Activated CD4-positive, alpha-beta memory T cell treated with anti-CD3 and anti-CD28 coated beads for 36 hours (primary cell): ENCODE measurements at regions of chr6 and their contacts with region 1.

Region 1: DNA sequence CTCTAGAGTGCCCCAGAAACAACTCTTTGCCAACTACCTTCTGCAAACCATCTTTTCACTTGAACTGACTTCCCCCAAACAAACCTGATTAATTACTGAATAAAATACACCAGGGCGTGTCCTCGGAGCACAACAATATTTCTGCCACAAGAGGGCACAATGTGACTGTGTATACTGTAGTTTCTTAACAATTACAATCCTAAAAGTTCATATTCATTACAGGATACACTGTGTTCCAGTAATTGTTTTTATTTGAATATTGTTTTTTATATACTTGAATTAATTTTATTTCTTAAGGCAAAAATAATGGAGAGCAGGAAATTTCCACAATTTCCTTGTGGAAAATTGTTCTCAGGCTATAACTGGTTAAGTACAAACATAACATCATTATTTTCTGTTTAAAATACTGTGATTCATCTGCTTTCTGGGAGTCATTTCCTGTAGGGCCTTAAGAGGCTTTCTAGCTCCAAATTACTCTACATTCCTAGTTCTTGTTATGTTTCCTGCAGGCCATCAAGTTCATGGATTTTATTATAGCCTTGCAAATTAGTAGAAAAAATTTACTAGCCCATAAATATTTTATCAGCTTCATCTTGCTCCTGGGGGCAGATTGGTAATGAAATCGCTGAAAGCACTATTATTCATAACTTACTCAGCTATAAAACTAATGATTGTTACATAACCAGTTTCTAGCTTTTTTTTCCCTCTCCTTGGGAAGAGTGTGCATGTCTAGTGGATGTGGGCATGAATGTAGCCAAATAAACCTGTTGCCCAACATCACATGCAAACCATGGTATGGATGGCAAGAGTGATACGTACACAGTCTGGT is 51.9 kb upstream of the SLC22A16 start:
- DNase-seq: peak; percentile 57
- H3K4me3 Mint-ChIP-seq: no peak overlapping the region
- H3K27ac Mint-ChIP-seq: no peak overlapping the region
- H3K4me1 Mint-ChIP-seq: peaks cover 4% of the 10 kb centered on the region
- H3K27me3 Mint-ChIP-seq: no peaks in the 10 kb centered on the region

Region 2: GRCh38 chr6:110201151-110201884 is 327.0 kb before region 1 on chr6:
- CTCF ChIA-PET with region 1: no interaction called
- POLR2A ChIA-PET with region 1: no interaction called
- intact Hi-C with region 1: no loop called
- DNase-seq: no peak
- H3K4me3 Mint-ChIP-seq: no peak overlapping the region
- H3K27ac Mint-ChIP-seq: no peak overlapping the region
- H3K4me1 Mint-ChIP-seq: peaks cover 4% of the 10 kb centered on the region
- H3K27me3 Mint-ChIP-seq: no peaks in the 10 kb centered on the region

Region 3: DNA sequence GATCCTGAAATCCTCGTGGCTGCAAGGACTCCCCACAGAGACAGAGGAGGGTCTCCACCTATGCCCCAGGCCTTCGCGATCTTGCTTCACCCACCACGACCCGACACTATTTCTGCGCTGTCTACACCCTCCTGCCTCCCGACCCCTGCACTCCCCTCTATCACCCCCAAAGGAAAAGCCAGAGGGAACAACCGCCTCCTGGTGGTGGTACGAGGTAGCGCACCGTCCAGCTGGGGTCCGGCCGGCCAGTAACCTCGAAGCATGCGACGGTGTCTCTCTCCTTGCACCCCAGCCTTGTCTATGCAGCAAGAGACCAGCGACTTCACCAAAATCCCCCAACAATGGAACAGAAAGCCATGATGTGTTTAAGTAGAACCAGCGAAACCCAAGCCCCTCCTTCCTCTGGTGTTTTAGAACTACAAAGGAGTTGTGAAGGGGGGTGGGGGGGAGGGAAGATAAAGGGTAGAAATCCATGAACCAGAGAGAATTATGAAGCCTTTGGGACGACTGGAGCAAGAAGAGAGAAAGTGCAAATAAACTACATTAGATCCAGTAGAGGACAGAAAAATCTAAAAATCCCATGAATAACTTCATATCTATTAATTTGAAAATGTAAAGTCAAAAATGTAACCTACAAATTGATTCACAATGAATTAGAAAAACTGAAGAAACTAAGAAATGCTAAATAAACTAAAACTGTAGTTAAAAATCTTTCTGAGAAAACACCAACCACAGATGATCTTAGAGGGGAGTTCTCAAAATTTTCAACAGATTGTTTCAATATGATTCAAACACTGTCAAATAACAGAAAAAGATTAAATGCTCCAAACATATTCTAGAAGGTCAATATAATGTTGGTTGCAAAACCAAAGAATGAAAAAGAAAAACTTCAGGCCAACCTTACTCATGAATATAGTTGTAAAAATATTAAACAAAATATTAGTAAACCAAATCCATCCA is 118.9 kb after region 1 on chr6:
- CTCF ChIA-PET with region 1: no interaction called
- POLR2A ChIA-PET with region 1: no interaction called
- intact Hi-C with region 1: no loop called
- DNase-seq: no peak
- H3K4me3 Mint-ChIP-seq: no peak overlapping the region
- H3K27ac Mint-ChIP-seq: no peak overlapping the region
- H3K4me1 Mint-ChIP-seq: peaks cover 8% of the 10 kb centered on the region
- H3K27me3 Mint-ChIP-seq: no peaks in the 10 kb centered on the region

Region 4: GRCh38 chr6:110873981-110874879 is 345.9 kb after region 1 on chr6 and contains the start of gene AMD1:
- CTCF ChIA-PET with region 1: interaction called, 8 read pairs
- POLR2A ChIA-PET with region 1: interaction called, 3 read pairs
- intact Hi-C with region 1: loop called (anchors 5 kb)
- DNase-seq: peak; percentile 96
- H3K4me3 Mint-ChIP-seq: peak within 1 kb of the TSS; percentile 96
- H3K27ac Mint-ChIP-seq: peak within 1 kb of the TSS; percentile 97
- H3K4me1 Mint-ChIP-seq: peaks cover 27% of the 10 kb centered on the region
- H3K27me3 Mint-ChIP-seq: no peaks in the 10 kb centered on the region
- total RNA-seq, gene AMD1: 79.1 to 84.3 TPM

Region 5: DNA sequence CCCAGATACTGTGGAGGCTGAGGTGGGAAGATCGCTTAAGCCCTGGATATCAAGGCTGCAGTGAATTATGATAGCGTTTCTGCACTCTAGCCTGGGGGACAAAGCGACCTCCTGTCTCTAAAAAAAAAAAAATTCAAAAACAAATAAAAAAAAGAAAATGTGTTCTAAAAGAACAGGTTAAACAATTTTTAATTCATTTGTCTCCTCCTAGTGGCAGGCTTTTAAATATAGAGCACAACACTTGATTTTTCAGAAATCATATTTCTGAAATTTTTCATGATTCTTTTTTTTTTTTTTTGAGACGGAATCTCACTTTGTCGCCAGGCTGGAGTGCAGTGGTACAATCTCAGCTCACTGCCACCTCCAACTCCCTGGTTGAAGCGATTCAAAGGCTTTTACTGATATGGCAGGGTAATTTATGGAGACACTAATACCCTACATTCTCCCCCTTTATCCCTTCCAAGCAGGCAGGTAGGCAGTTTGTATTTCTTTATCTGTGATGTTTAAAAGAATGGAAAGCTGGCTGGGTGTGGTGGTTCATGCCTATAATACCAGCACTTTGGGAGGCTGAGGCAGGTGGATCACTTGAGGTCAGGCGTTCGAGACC is 421.5 kb after region 1 on chr6:
- CTCF ChIA-PET with region 1: interaction called, 6 read pairs
- POLR2A ChIA-PET with region 1: interaction called, 5 read pairs
- intact Hi-C with region 1: loop called (anchors 1 kb)
- DNase-seq: no peak
- H3K4me3 Mint-ChIP-seq: no peak overlapping the region
- H3K27ac Mint-ChIP-seq: no peak overlapping the region
- H3K4me1 Mint-ChIP-seq: peaks cover 1% of the 10 kb centered on the region
- H3K27me3 Mint-ChIP-seq: no peaks in the 10 kb centered on the region

Region 6: DNA sequence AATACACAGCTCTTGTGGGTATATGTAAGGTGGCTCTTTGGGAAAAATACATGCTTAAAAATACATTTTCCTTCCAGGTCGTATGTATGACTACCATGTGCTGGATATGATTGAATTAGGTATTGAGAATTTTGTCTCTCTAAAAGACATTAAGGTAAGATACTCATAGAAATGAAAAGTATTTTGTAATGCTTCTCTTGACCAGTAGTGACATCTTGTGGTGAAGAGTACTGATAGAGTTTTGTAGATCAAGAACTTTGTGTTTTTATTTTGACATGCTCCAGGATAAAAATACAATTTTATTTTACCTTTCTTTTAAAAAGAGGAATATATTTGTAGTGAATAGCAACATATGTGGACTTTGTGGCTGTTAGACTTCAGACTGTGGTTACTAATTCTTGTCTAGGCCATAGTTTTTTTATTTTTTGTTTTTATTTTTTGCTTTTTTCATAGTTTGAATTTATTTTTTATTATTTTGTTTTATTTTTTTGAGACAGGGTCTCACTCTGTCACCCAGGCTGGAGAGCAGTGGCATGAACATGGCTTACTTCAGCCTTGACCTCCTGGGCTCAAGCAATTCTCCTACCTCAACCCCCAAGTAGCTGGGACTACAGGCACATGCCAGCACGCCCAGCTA is 471.4 kb after region 1 on chr6:
- CTCF ChIA-PET with region 1: no interaction called
- POLR2A ChIA-PET with region 1: no interaction called
- intact Hi-C with region 1: loop called (anchors 1 kb)
- DNase-seq: no peak
- H3K4me3 Mint-ChIP-seq: no peak overlapping the region
- H3K27ac Mint-ChIP-seq: no peak overlapping the region
- H3K4me1 Mint-ChIP-seq: peaks cover 4% of the 10 kb centered on the region
- H3K27me3 Mint-ChIP-seq: no peaks in the 10 kb centered on the region